Heart right ventricle (tissue), 16 donors: ENCODE measurements at regions of chr5 and their contacts with region 1.

Region 1: DNA sequence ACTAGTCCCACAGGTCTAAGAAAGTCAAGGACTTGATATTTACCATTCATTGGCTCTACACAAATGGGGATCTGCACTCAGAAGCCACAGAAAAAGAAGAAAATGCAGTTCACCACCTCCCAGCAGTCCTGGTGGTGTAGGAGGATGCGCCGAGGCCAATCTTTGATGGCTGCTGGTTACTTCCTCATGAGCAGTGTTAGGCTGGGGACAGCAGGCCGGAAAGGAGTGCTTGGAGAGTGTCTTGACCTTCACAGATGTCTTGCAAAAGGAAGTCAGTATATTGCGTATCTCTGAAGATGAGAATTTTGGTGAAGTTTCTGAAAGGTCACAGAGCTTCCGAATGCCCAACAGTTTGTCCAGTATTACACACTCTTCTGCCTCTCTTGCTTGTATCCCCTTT is 597.0 kb downstream of the EBF1 start:
- DNase-seq: peak in 1 of 2 donors; percentile 15
- ATAC-seq: peak in 4 of 8 donors; percentile 39 to 57 (median 48)
- H3K4me3 ChIP-seq: no peak overlapping the region
- H3K27ac ChIP-seq: peak overlapping the region in 4 of 10 donors; percentile 18 to 41 (median 30)
- H3K4me1 ChIP-seq: peaks cover 0 to 38% (median 11%) of the 10 kb centered on the region in 9 donors
- H3K27me3 ChIP-seq: no peaks in the 10 kb centered on the region
- CTCF ChIP-seq: no peak

Region 2: DNA sequence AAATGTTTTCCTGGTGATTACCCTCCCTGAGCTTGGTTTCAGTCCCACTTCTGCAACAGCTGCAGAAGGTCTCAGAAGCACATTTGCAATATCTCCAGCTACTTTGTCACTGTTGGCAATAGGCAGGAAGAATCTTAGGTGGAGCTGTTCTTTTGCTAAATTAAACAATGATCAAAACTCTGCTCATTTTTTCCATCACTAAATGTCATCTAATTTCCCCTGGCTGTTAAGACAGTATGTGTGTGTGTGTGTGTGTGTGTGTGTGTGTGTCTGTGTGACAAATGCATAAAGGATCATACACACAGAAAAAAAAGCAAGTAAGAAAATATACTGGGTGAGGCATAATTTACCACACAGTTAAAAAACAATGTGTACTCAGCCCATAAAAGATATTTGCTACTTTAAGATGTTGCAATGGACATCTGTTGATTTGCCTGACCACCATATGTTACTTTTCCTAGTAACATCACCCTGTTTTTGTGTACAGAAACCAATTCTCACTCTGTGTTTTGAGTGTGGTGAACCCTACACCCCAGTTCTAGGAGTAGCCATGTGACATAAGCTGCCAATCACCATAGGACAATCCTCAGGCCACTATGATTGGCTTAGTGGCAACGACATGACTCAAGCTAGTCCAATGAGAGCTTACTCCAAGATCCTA is 71.2 kb before region 1 on chr5:
- intact Hi-C with region 1: loop called in 1 of 10 experiments (anchors 2 kb)
- DNase-seq: peak in 1 of 2 donors; percentile 35
- ATAC-seq: peak; percentile 62 to 90 (median 81)
- H3K4me3 ChIP-seq: no peak overlapping the region
- H3K27ac ChIP-seq: peak overlapping the region; percentile 26 to 83 (median 78)
- H3K4me1 ChIP-seq: peaks cover 0 to 38% (median 16%) of the 10 kb centered on the region in 9 donors
- H3K27me3 ChIP-seq: no peaks in the 10 kb centered on the region
- CTCF ChIP-seq: no peak

Region 3: DNA sequence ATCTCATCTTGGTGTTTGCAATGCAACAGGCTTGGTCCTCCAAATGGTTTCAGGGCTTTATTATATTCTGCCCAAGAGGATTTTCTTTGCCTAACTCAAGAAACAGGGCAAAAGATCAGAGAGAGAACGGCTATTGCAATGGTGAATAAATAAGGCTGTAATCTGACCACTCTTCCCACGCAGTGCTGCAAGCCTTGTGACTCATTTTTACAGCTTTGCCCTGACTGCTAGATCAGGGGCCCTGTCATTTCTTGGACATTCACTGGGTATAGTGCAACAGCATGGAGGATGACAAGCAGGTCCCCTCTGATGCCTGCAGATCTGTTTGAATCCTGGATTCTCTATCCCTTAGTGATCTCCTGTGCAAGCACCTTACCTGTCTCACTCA is 137.9 kb after region 1 on chr5:
- intact Hi-C with region 1: loop called in 1 of 10 experiments (anchors 10 kb)
- DNase-seq: no peak
- ATAC-seq: no peak
- H3K4me3 ChIP-seq: no peak overlapping the region
- H3K27ac ChIP-seq: no peak overlapping the region
- H3K4me1 ChIP-seq: peaks cover 0 to 24% (median 7%) of the 10 kb centered on the region in 9 donors
- H3K27me3 ChIP-seq: no peaks in the 10 kb centered on the region
- CTCF ChIP-seq: no peak